Aorta (tissue), 5 donors: ENCODE measurements at regions of chr5 and their contacts with region 1.

Region 1: DNA sequence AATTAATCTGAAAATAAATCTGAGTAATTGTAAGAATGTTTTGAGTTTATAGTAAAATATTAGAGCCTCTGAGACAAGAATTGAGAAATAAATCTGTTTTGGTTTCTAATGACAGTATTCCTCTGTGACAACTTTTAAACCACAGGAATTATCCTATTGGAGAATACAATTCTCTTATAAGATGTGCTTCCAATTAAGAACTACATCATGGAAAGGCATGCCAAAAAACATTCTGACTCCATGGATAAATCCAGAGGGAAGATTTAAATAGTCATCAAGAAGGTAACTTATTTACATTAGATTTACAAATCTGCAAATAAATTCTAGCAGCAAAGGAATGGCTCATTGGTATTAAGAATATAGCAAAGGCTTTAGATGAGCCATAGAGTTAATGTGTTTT is 178.3 kb upstream of the ACOT12 start:
- DNase-seq: no peak
- ATAC-seq: no peak
- H3K4me3 ChIP-seq: no peak overlapping the region
- H3K27ac ChIP-seq: no peak overlapping the region
- H3K4me1 ChIP-seq: peaks cover 0 to under 1% of the 10 kb centered on the region in 2 donors
- H3K27me3 ChIP-seq: no peaks in the 10 kb centered on the region

Region 2: GRCh38 chr5:81556809-81557208 is 15.4 kb before region 1 on chr5:
- intact Hi-C with region 1: loop called in 1 of 2 experiments (anchors 2 kb)
- DNase-seq: no peak
- ATAC-seq: no peak
- H3K4me3 ChIP-seq: no peak overlapping the region
- H3K27ac ChIP-seq: no peak overlapping the region
- H3K4me1 ChIP-seq: no peaks in the 10 kb centered on the region
- H3K27me3 ChIP-seq: no peaks in the 10 kb centered on the region